ENCODE measurements at regions of chr1 and their contacts with region 1.

Region 1: DNA sequence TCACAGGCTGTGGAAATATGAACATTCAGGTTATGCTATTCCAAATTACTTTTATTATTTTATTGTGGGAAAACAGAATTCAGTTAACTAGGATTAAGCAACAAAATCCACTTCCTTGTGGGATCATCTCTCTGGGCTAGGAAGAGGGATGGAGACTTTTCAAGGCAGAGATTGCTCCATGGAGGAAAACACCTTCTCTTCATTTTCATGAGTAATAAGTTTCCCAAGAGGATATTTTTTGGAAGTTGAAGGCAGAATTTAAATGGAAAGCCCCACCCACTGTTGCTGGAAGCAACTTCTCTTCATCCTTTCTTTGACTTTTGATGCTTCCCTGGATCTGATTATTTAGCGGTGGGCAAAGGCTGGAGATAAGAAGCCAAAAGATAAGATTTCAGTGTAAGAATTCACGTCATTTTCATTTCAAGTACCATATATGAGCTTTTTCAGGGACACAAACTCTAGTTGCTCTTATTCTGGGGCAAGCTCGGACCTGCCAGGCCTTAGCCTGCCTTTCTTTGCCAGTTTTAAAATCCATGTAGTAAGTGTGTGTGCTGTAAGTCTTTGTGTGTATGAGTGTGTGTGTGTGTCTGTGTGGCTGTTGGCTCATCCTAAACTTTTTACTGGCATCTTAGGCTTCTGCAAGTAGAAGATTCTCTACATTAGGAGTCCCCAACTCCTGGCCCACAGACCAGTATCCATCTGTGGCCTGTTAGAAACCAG is 11.7 kb upstream of the IL24 start:
- DNase-seq: no peak
- H3K4me3 Mint-ChIP-seq: no peak overlapping the region
- H3K27ac Mint-ChIP-seq: no peak overlapping the region
- H3K4me1 Mint-ChIP-seq: peaks cover 14% of the 10 kb centered on the region
- H3K27me3 Mint-ChIP-seq: peaks cover 2% of the 10 kb centered on the region

Region 2: GRCh38 chr1:206895830-206896242 is 10.3 kb after region 1 on chr1:
- CTCF ChIA-PET with region 1: interaction called, 19 read pairs
- POLR2A ChIA-PET with region 1: no interaction called
- DNase-seq: no peak
- H3K4me3 Mint-ChIP-seq: no peak overlapping the region
- H3K27ac Mint-ChIP-seq: no peak overlapping the region
- H3K4me1 Mint-ChIP-seq: peaks cover 34% of the 10 kb centered on the region
- H3K27me3 Mint-ChIP-seq: no peaks in the 10 kb centered on the region

Region 3: GRCh38 chr1:206925106-206925736 is 39.7 kb after region 1 on chr1:
- CTCF ChIA-PET with region 1: no interaction called
- POLR2A ChIA-PET with region 1: no interaction called
- DNase-seq: peak; percentile 65
- H3K4me3 Mint-ChIP-seq: no peak overlapping the region
- H3K27ac Mint-ChIP-seq: no peak overlapping the region
- H3K4me1 Mint-ChIP-seq: peaks cover 27% of the 10 kb centered on the region
- H3K27me3 Mint-ChIP-seq: no peaks in the 10 kb centered on the region

Measured in activated CD4-positive, alpha-beta T cell treated with anti-CD3 and anti-CD28 coated beads, Interleukin-2, amount 10 ng/mL, durations not matched to agents 7 days and 5 days (primary cell).